Calu3 (cell line): ENCODE measurements at regions of chr15 and their contacts with region 1.

Region 1: DNA sequence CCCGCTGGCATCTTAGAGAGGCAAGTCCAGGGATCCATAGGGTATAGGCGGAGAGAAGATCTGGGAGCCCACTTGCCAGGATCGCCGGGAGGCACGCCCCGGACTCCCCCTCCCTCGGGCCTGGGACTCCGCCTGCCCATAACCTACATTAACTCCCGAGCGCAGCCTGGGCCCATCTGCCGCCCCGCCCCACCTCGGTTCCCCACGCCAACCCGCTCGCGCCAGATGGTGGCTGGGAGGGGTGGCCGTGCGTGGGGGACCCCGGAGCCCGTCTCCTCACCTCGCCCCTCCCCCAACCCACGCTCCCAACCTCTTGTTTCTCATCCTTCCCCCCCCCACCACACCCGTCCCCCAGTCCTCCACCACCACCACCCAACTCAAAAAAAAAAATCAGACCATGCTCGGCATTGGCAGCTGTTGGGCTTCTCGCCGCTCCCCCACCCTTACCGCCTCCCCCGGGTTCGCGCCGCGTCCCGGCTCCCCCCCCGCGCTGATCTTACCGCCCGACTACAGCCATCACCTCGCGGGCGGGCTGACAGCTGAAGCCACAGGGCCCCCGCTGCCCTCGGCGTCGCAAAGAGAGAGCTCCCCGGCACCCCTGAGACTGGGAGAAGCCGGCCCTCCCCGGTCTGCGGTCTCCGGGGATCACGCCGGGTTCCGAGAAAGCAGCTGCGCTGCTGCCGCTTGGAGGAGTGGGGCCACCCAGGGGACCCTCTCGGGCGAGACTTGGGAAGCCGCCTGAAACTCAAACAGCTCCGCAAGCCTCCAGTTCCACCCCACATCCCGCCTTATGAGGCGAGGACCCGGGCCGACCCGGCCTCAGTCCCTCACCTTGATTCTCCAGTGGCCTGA is 1.4 kb upstream of the DLL4 start:
- DNase-seq: no peak
- H3K4me3 Mint-ChIP-seq: peak overlapping the region; percentile 66
- H3K27ac Mint-ChIP-seq: no peak overlapping the region
- H3K4me1 Mint-ChIP-seq: peaks cover 15% of the 10 kb centered on the region
- H3K27me3 Mint-ChIP-seq: peaks cover 49% of the 10 kb centered on the region
- CTCF ChIP-seq: no peak

Region 2: DNA sequence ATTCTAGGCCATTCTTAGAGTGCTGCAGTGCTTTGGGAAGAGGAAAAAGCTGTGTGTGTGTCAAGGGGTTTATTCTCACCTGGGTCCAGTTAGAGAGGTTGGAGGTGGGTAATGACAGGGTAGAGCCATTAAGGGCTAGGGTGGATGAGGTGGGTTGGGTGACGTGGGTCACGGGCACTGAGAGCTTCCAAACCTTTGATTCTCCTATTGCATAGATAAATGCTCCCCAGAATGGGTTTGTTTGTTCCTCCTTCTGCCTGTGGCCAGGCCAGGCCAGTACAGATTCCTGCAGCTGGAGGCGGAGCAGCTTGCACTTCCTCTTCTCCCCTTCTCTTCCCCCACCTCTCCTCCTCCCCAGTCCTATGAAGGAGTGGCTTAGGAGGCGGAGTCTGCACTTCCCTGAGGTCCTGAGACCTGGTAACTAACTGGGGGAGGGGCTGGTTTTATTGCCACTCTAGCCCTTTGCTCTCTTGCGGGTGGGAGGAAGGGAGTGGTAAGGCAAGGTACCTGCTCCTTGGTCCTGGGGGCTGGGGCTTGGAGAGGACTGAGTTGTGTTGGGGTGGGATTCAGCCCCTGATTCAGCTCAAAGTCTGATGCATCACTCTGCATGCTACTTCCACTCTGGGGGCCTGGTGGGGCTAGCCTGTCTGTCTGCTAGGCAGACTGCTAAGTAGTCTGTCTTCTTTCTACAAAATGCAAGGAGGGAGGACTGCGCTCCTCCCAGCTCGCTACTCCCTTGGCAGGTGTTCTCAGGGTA is 80.3 kb before region 1 on chr15:
- CTCF ChIA-PET with region 1: interaction called, 10 read pairs
- intact Hi-C with region 1: no loop called
- DNase-seq: peak; percentile 64
- H3K4me3 Mint-ChIP-seq: peak overlapping the region; percentile 79
- H3K27ac Mint-ChIP-seq: peak overlapping the region; percentile 70
- H3K4me1 Mint-ChIP-seq: peaks cover 16% of the 10 kb centered on the region
- H3K27me3 Mint-ChIP-seq: no peaks in the 10 kb centered on the region
- CTCF ChIP-seq: no peak

Region 3: GRCh38 chr15:41291065-41291631 is 363.4 kb after region 1 on chr15:
- CTCF ChIA-PET with region 1: no interaction called
- intact Hi-C with region 1: no loop called
- DNase-seq: no peak
- H3K4me3 Mint-ChIP-seq: no peak overlapping the region
- H3K27ac Mint-ChIP-seq: no peak overlapping the region
- H3K4me1 Mint-ChIP-seq: no peaks in the 10 kb centered on the region
- H3K27me3 Mint-ChIP-seq: no peaks in the 10 kb centered on the region
- CTCF ChIP-seq: no peak